Activated CD8-positive, alpha-beta T cell treated with anti-CD3 and anti-CD28 coated beads, Interleukin-2, amount 10 ng/mL, durations not matched to agents 7 days and 5 days (primary cell): ENCODE measurements at regions of chr6 and their contacts with region 1.

Region 1: DNA sequence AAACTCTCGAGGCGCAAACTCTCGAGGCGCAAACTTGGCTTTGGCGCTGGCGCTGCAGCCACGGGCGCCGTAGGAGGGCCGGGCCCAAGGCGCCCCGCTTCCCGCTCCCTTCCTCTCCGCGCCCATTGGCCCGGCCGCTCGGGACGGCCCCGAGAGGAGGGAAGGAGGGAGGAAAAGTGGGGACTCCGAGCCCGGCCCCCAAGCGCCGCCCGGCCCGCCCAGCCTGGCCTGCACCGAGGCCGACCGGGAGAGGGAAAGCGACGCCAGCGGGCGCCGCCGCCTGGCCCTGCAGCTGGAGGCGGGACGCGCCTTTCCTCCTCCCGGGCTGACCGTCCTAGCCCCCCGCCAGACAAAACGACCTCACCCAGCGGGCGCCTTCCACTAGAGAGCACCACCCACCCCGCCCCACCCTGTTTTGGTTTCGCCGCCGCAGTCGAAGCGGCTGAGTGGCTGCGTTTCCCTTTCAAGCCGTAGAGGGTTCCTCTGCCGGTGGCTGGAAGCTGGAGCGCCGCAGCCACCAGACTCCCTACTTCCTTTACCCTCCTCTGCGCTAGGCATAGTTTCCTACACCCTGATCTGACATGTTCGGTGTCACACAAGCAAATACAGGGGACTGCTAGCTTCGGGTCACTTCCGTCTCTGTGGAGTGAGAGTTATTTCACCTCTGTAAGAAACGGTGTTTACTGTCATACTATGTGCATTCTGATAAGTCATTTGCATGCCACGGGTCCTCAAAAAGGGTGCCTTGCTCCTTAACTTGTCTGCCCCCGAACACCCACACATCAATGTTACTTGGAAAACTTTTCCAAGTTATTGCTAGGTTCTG is at the start of gene MBOAT1:
- DNase-seq: peak; percentile 80
- ATAC-seq: peak; percentile 91
- H3K4me3 Mint-ChIP-seq: peak within 1 kb of the TSS; percentile 89
- H3K27ac Mint-ChIP-seq: peak within 1 kb of the TSS; percentile 98
- H3K4me1 Mint-ChIP-seq: peaks cover 36% of the 10 kb centered on the region
- H3K27me3 Mint-ChIP-seq: peaks cover 6% of the 10 kb centered on the region
- total RNA-seq, gene MBOAT1: 14.2 to 15.5 TPM

Region 2: GRCh38 chr6:20071998-20072397 is 140.6 kb before region 1 on chr6:
- CTCF ChIA-PET with region 1: no interaction called
- POLR2A ChIA-PET with region 1: no interaction called
- DNase-seq: no peak
- ATAC-seq: no peak
- H3K4me3 Mint-ChIP-seq: no peak overlapping the region
- H3K27ac Mint-ChIP-seq: no peak overlapping the region
- H3K4me1 Mint-ChIP-seq: no peaks in the 10 kb centered on the region
- H3K27me3 Mint-ChIP-seq: peaks cover 20% of the 10 kb centered on the region

Region 3: DNA sequence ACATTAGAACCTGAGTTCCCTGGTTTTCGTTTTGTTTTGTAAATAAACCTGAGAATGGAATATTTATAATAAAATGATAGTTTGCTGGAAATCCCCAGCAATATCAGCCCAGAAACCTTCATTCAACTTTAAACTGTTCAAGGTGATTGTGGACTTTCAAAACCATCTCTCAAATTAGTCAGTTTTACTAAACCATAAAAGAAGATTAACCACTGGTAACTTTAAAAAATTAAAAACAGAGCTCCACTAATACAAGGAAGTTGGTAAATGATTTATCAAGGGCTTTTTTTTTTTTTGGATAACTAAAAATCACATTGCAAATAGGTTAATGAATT is 10.3 kb before region 1 on chr6:
- CTCF ChIA-PET with region 1: interaction called, 4 read pairs
- POLR2A ChIA-PET with region 1: interaction called, 14 read pairs
- DNase-seq: no peak
- ATAC-seq: no peak
- H3K4me3 Mint-ChIP-seq: no peak overlapping the region
- H3K27ac Mint-ChIP-seq: no peak overlapping the region
- H3K4me1 Mint-ChIP-seq: peaks cover 50% of the 10 kb centered on the region
- H3K27me3 Mint-ChIP-seq: no peaks in the 10 kb centered on the region